PC-3 (cell line): ENCODE measurements at regions of chr5 and their contacts with region 1.

Region 1: DNA sequence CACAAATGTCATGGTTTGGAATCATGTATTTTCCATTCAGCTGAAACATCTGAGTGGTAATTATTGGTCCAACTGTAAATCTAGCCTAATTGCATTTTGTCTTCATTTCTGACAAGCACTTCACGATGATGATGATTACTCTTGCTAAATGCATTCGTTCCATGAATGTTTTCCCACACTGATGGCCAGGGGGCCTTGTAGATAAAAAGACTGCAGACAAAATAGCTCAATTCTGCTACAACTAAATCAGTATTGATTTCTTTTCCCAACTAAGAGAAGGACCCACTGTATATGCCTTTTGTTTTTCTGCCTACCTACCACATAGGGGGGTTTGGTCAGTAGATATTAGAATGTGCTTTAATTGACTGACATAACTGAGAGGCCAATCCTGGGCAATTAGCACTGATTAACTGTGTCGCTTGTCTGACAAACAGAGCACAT is 1351.3 kb upstream of the NUDT12 start:
- DNase-seq: no peak
- ATAC-seq: no peak
- H3K4me3 ChIP-seq: no peak overlapping the region
- H3K27ac ChIP-seq: no peak overlapping the region
- H3K4me1 ChIP-seq: peaks cover 38% of the 10 kb centered on the region
- H3K27me3 ChIP-seq: no peaks in the 10 kb centered on the region
- CTCF ChIP-seq: no peak

Region 2: GRCh38 chr5:104189909-104190308 is 724.0 kb before region 1 on chr5:
- CTCF ChIA-PET with region 1: no interaction called
- POLR2A ChIA-PET with region 1: no interaction called
- intact Hi-C with region 1: loop called (anchors 10 kb)
- DNase-seq: peak; percentile 81
- ATAC-seq: peak; percentile 84
- H3K4me3 ChIP-seq: no peak overlapping the region
- H3K27ac ChIP-seq: peak overlapping the region; percentile 19
- H3K4me1 ChIP-seq: peaks cover 22% of the 10 kb centered on the region
- H3K27me3 ChIP-seq: no peaks in the 10 kb centered on the region
- CTCF ChIP-seq: no peak

Region 3: DNA sequence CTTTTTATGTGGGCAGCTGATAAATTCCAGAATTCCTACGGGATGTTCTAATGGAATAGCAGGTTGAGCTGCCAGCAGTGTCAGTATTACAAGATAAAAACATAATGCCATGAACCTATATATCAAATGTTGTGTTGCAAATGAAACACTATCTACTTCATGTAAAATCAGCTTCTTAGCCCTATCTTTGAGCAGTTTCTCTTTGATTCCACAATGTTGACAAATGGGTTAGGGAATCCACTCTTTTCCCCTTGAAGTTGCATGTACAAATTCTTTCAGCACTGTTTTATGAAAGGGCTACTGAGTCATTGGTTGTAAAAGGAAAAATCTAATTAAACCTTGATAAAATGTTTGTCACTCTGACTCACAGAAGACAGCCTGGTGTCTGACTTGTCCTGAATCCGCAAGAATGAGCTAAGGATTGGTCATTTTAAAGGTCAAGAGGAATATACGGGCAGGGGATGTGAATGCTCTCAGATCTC is 400.7 kb before region 1 on chr5:
- CTCF ChIA-PET with region 1: no interaction called
- POLR2A ChIA-PET with region 1: no interaction called
- intact Hi-C with region 1: loop called (anchors 1 kb)
- DNase-seq: peak; percentile 97
- ATAC-seq: peak; percentile 94
- H3K4me3 ChIP-seq: peak overlapping the region; percentile 15; the same call in 1 of the 2 replicates
- H3K27ac ChIP-seq: peak overlapping the region; percentile 67
- H3K4me1 ChIP-seq: peaks cover 29% of the 10 kb centered on the region
- H3K27me3 ChIP-seq: no peaks in the 10 kb centered on the region
- CTCF ChIP-seq: no peak

Region 4: DNA sequence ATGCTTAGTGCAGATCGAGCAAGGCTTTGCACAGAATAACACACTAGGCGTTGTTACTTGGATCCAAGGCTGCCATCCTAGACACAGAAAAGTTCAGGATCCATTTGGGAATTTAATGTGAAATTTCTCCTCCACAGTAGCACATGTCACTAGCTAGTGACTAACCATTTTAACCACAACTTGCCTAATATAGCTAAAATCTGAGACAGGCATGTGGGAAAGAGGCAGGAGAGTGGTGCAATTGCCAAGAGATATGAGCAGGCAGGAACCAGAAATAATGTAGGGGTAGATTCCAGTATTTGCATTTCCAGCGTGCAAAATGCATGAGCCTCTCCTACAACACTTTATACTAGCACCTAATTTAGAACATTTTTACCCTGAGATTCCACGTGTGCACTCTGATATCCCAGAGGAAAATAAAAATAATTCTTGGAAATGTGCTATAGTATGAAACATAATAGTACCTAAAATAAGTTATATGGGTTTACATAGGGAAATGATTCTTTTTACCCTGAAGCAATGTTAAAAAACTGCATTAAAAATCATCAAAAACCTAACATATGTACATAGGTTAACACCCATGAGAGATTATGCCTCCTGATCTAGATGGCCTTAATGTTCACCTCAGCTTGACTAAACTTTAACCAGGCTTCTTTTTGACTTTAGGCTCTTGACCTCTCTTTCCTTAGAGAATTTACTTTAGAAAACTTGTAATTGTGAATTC is 120.7 kb before region 1 on chr5:
- CTCF ChIA-PET with region 1: no interaction called
- POLR2A ChIA-PET with region 1: no interaction called
- intact Hi-C with region 1: loop called (anchors 5 kb)
- DNase-seq: peak; percentile 59
- ATAC-seq: peak; percentile 48
- H3K4me3 ChIP-seq: no peak overlapping the region
- H3K27ac ChIP-seq: no peak overlapping the region
- H3K4me1 ChIP-seq: peaks cover 12% of the 10 kb centered on the region; the same call in 1 of the 2 replicates
- H3K27me3 ChIP-seq: no peaks in the 10 kb centered on the region
- CTCF ChIP-seq: no peak